IMR-90 (cell line): ENCODE measurements at regions of chr5 and their contacts with region 1.

Region 1: DNA sequence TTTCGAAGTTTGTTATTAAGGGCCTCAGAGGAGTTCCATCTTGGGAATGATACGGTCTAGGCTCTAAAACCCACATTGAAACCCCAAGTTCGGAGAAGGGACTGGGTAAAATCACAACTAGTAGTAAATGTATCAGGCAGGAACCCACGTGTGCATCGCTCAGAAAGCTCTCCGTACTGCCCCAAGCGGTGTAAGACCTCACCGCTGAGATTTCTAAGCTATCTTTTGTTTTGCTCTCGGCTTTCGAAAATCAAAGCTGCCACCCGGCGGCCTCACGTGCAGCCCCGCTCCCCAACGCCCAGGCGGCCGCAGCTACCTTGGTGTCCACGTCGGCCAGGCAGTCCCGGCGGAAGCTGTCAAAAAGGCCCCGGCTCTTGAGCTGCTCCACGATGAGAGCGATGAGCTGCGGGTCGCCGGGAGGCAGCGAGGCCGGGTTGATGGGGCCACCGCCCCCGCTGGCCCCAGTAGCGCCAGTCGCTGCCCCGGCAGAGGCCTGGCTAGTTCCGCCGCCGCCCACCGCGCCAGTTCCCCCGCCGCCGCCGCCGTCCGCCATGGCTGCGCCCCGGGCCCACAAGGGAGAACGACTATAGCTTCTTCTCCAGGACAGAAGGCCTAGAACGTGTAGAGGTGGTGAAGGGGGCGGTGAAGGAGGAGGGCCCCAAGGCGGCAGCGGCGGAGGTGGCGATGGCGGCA is 420 bp downstream of the BOD1 start:
- DNase-seq: peak; percentile 85
- ATAC-seq: peak; percentile 61
- H3K4me3 ChIP-seq: peak overlapping the region; percentile 95
- H3K27ac ChIP-seq: peak overlapping the region; percentile 79
- H3K4me1 ChIP-seq: peaks cover 11% of the 10 kb centered on the region
- H3K27me3 ChIP-seq: no peaks in the 10 kb centered on the region
- CTCF ChIP-seq: peak; percentile 75
- POLR2A ChIP-seq: peak; percentile 68; the same call in 1 of the 2 replicates
- RAD21 ChIP-seq: peak; percentile 59

Region 2: DNA sequence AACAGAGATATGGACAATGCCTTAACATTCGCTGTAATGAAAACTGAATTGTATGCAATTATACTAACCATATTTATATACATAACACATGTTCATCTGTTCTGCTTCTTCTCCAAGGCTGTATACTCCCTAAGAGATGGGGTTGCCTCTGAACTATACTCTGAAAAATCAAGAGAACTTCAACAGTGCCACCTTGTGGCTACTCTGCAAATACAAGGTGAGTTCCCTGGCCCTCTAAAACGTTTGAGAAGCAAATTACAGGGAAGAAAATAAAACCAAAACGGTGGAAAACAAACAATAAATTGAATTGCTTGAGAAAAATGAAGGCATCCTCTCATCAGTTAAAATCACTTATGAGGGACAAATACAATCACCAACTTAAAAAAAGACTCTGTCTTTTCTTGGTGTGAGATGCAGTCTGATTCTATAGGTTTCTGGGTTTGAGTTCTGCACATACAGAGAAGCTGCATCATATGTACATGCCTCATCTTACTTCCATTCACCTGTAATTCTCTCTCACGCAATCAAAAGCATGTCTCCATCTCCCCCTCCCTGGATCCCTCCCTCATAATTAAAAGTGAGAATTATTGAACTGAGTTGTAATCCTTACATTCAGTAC is 1708.2 kb before region 1 on chr5:
- CTCF ChIA-PET with region 1: no interaction called
- POLR2A ChIA-PET with region 1: no interaction called
- dilution Hi-C with region 1: no loop called
- in situ Hi-C with region 1: no loop called
- intact Hi-C with region 1: no loop called
- DNase-seq: peak; percentile 72
- ATAC-seq: peak; percentile 92
- H3K4me3 ChIP-seq: no peak overlapping the region
- H3K27ac ChIP-seq: no peak overlapping the region
- H3K4me1 ChIP-seq: no peaks in the 10 kb centered on the region
- H3K27me3 ChIP-seq: no peaks in the 10 kb centered on the region
- CTCF ChIP-seq: peak; percentile 76
- POLR2A ChIP-seq: no peak
- RAD21 ChIP-seq: peak; percentile 75

Region 3: GRCh38 chr5:173293817-173294672 is 322.0 kb before region 1 on chr5:
- CTCF ChIA-PET with region 1: interaction called, 16 read pairs
- POLR2A ChIA-PET with region 1: interaction called, 3 read pairs
- dilution Hi-C with region 1: no loop called
- in situ Hi-C with region 1: no loop called
- intact Hi-C with region 1: loop called (anchors 1 kb)
- DNase-seq: peak; percentile 80
- ATAC-seq: peak; percentile 84
- H3K4me3 ChIP-seq: no peak overlapping the region
- H3K27ac ChIP-seq: peak overlapping the region; percentile 29
- H3K4me1 ChIP-seq: peaks cover 17% of the 10 kb centered on the region
- H3K27me3 ChIP-seq: no peaks in the 10 kb centered on the region; the same call in 1 of the 2 replicates
- CTCF ChIP-seq: peak; percentile 96
- POLR2A ChIP-seq: peak; percentile 55; the same call in 1 of the 2 replicates
- RAD21 ChIP-seq: peak; percentile 96

Region 4: DNA sequence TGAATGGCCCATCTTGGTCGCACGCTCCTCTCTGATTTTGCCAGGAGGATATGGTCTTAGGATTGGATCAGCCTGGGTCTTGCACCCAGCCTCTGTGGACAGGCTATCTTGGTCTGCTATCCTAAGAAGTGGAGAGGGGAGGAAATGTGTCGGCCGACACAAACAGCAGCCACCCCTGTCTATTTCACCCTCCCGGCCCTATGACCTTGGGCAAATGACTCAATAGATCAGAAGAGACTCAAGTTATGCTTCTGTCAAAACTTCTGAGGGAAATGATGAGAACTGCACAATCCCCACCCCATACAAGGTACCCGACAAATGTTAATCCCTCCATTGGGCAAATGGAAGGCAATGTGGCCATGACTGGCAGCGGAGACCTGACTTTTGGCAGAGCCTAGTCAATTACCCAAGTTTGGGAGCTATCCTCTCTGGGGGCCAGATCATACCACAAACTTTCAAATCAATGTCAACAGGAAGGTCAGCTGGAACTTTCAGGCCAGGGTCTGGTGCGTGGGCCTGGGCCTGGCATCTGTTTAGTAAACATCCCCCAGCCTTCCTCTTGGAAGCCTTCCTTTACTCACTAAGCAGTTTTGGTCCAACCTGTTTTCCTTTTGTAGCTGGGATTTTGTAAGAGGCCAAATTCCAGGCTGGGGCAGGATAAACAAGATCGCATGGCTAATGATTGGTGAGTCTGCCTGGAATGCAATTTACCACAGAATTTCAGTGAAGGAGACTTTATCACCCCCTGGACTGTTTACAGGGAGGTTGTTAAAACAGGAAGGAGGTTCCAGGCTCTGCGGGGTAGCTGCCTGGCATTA is 207.9 kb after region 1 on chr5:
- CTCF ChIA-PET with region 1: no interaction called
- POLR2A ChIA-PET with region 1: no interaction called
- dilution Hi-C with region 1: no loop called
- in situ Hi-C with region 1: no loop called
- intact Hi-C with region 1: loop called (anchors 5 kb)
- DNase-seq: peak; percentile 85
- ATAC-seq: peak; percentile 94
- H3K4me3 ChIP-seq: no peak overlapping the region
- H3K27ac ChIP-seq: peak overlapping the region; percentile 20
- H3K4me1 ChIP-seq: peaks cover 11% of the 10 kb centered on the region
- H3K27me3 ChIP-seq: no peaks in the 10 kb centered on the region
- CTCF ChIP-seq: no peak
- POLR2A ChIP-seq: no peak
- RAD21 ChIP-seq: no peak

Region 5: GRCh38 chr5:173972925-173973615 is 357.0 kb after region 1 on chr5:
- CTCF ChIA-PET with region 1: interaction called, 12 read pairs
- POLR2A ChIA-PET with region 1: no interaction called
- dilution Hi-C with region 1: no loop called
- in situ Hi-C with region 1: loop called (anchors 5 kb)
- intact Hi-C with region 1: loop called (anchors 1 kb)
- DNase-seq: peak; percentile 83
- ATAC-seq: peak; percentile 80
- H3K4me3 ChIP-seq: peak overlapping the region; percentile 36
- H3K27ac ChIP-seq: no peak overlapping the region
- H3K4me1 ChIP-seq: peaks cover 13% of the 10 kb centered on the region
- H3K27me3 ChIP-seq: no peaks in the 10 kb centered on the region; the same call in 1 of the 2 replicates
- CTCF ChIP-seq: peak; percentile 89
- POLR2A ChIP-seq: no peak
- RAD21 ChIP-seq: peak; percentile 95